ENCODE measurements at regions of chr19 and their contacts with region 1.

Region 1: GRCh38 chr19:46030812-46031550 is 8.1 kb upstream of the PGLYRP1 start:
- DNase-seq: no peak
- ATAC-seq: no peak
- H3K4me3 Mint-ChIP-seq: no peak overlapping the region
- H3K27ac Mint-ChIP-seq: no peak overlapping the region
- H3K4me1 Mint-ChIP-seq: peaks cover 14% of the 10 kb centered on the region
- H3K27me3 Mint-ChIP-seq: peaks cover 44% of the 10 kb centered on the region

Region 2: DNA sequence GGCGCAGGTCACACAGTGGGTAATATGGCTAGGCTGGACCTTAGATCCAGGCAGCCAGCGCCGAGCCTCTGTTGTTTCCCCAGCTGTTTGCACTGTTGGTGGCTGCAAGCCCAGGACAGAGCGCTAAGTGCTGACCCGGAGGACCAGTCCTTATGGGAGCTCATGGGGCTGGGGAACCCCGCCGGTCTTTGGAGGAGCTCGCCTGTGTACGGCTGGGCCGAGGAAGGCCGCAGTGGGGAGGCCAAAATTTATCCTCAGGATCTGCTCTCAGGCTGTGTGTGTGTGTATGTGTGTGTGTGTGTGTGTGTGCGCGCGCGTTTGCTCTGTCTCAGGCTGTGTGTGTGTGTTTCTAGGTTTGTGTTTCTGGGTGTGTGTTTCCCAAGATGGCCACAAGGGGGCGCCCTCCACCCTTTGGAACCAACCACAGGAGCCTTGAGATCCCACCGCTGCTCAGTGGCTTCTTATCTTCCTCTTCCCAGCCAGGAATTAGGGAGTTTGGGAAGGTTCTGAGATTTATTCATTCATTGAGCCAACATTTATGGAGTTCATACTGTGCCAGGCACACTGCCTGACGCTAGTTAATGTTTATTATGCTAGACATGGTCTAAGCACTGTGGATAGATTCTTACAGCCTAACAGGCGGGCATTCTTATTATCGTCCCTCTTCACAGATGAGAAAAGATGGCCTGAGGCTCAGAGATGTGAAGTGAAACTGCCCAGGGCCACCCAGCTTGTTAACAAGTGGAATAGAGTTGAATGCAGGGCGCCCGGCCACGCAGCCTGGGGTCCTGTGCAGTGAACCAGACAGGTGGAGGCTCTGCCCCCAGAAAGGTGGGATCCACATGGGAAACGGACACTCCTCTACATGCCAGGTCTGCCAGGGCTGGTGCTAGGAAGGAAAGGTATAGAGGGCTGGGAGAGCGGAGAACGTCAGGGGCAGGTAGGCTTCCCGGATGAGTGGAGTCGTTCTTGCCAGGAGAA is 21.2 kb before region 1 on chr19:
- CTCF ChIA-PET with region 1: interaction called, 14 read pairs
- DNase-seq: peak; percentile 69
- ATAC-seq: peak; percentile 60
- H3K4me3 Mint-ChIP-seq: no peak overlapping the region
- H3K27ac Mint-ChIP-seq: no peak overlapping the region
- H3K4me1 Mint-ChIP-seq: peaks cover 4% of the 10 kb centered on the region
- H3K27me3 Mint-ChIP-seq: peaks cover 6% of the 10 kb centered on the region

Region 3: DNA sequence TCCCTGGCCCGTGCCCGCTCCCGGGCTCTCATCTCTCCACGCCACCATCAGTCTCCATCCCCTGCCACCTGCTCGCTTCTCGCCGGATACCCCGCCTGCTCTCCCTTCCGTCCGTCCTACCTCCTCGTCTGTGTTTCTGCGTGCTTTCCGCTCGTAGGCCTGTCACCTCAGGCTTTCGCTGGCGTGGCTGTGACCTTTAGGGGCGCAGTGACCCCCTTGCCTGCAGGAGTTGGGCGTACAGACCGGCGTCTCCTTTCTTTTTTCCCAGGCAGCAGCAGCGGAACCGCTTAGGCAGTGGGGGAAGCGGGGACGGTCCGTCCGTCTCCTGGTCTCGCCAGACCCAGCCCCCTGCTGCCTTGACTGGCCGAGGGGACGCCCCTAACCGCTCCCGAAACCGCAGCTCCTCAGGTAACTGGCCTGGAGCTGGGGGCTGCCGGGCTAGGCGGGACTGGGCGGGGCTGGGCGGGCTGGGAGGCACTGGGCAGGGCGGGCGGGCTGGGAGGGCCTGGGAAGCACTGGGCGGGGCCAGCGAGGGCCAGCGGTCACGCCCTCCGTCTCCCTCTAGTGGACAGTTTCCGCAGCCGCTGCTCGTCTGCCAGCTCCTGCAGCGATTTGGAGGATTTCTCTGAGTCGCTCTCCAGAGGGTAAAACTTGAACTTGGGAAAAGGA is 14.4 kb before region 1 on chr19:
- CTCF ChIA-PET with region 1: interaction called, 16 read pairs
- DNase-seq: peak; percentile 85
- ATAC-seq: peak; percentile 69
- H3K4me3 Mint-ChIP-seq: peak overlapping the region; percentile 78
- H3K27ac Mint-ChIP-seq: peak overlapping the region; percentile 61
- H3K4me1 Mint-ChIP-seq: peaks cover 15% of the 10 kb centered on the region
- H3K27me3 Mint-ChIP-seq: peaks cover 14% of the 10 kb centered on the region

Region 4: DNA sequence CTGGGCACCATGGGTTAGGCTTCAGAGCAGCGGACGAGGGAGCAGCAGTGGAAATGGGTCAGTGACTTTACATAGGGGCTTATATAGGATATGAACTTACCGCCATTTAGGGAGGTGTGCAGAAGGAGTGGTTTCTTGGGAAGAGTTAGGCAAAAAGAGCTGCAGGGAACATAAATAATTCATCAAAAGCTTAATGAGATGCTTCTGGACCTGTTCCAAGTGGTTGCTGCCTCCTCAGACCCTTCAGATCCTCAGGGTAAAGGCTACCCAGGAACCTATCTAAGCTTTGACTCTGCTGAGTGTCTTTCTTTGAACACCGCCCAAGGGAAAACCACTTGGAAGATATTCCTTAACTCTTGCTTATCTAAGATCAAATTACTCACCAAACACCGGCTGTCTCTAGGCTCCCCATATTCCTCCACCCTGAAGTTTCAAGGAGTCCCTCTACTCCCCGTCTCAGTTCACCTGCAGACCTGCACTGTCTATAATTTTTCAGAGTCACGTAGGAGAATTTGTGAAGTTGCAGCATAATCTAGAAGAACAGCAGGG is 10.0 kb after region 1 on chr19 and contains the start of gene IGFL4:
- CTCF ChIA-PET with region 1: interaction called, 19 read pairs
- DNase-seq: no peak
- ATAC-seq: no peak
- H3K4me3 Mint-ChIP-seq: no peak within 1 kb of the TSS
- H3K27ac Mint-ChIP-seq: no peak within 1 kb of the TSS
- H3K4me1 Mint-ChIP-seq: no peaks in the 10 kb centered on the region
- H3K27me3 Mint-ChIP-seq: peaks cover 54% of the 10 kb centered on the region
- total RNA-seq, gene IGFL4: not detected

Region 5: DNA sequence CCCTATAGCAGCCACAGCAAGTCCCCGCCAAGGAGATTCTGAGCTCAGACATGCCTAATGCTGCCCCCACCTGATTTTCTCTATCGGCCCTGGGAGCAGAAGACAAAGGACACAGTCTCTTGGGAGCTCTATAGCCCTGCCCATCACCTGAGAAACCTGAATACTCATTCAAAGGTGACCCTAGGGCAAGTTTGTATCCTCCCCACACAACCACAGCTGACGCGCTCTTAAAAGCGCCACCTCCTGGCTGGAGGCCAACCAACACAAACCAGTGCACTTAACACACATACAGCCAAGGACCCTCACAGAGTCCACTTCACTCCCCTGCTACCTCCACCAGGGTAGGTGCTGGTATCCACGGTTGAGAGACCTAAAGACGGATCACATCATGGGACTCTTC is 18.6 kb after region 1 on chr19:
- CTCF ChIA-PET with region 1: interaction called, 12 read pairs
- DNase-seq: no peak
- ATAC-seq: no peak
- H3K4me3 Mint-ChIP-seq: no peak overlapping the region
- H3K27ac Mint-ChIP-seq: no peak overlapping the region
- H3K4me1 Mint-ChIP-seq: no peaks in the 10 kb centered on the region
- H3K27me3 Mint-ChIP-seq: peaks cover 68% of the 10 kb centered on the region

Measured in activated CD8-positive, alpha-beta memory T cell treated with anti-CD3 and anti-CD28 coated beads, Interleukin-2, amount 10 ng/mL, durations not matched to agents 7 days and 5 days (primary cell).